Activated CD8-positive, alpha-beta T cell treated with anti-CD3 and anti-CD28 coated beads for 36 hours (primary cell): ENCODE measurements at regions of chr17 and their contacts with region 1.

Region 1: DNA sequence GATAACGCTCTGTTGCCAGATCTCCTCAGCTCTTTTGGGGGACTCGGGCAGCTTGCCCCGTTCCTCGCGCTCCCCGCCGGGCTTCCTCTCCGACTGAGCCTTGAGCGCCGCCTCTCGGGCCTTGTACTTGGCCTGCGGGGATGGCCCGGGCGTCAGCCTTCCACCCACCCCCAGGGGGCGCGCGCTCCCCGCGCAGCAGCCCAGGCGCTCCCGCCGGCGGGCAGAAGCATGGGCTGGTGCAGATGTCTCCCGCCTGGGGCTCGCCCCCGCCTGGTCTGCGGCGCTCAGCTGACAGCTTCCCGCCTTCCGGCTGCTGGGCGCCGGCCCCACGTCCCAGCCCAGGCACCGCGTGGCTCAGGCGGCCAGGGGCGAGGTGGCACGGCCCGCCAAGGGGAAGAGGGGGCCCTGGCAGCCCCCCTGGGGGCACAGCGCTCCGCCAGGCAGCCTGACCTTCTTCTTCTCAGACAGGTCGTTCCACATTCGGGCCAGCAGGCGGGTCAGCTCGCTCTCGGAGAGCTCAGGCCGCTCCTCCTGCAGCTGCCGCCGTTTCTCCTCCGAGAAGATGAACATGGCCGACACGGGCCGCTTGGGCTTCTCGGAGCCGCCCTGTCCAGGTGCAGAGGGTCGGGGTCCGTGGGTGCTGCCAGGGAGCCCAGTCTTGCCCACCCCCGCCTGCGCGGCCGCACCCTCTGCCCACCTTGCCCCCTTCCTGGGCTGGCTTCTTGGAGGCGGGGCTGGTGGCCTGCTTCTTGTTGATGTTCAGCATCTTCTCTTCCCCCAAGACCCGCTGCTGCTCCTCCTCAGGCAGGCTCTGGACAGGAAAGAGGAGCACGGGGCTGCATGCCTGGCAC is 8.9 kb downstream of the UBTF start:
- DNase-seq: peak; percentile 95
- ATAC-seq: peak; percentile 89
- H3K4me3 Mint-ChIP-seq: peak overlapping the region; percentile 82
- H3K27ac Mint-ChIP-seq: peak overlapping the region; percentile 97
- H3K4me1 Mint-ChIP-seq: peaks cover 63% of the 10 kb centered on the region
- H3K27me3 Mint-ChIP-seq: no peaks in the 10 kb centered on the region
- CTCF ChIP-seq: peak; percentile 99

Region 2: GRCh38 chr17:44199553-44200477 is 10.8 kb before region 1 on chr17 and contains the start of gene ATXN7L3:
- CTCF ChIA-PET with region 1: interaction called, 51 read pairs
- POLR2A ChIA-PET with region 1: interaction called, 58 read pairs
- intact Hi-C with region 1: no loop called
- DNase-seq: peak; percentile 100
- ATAC-seq: peak; percentile 85
- H3K4me3 Mint-ChIP-seq: peak within 1 kb of the TSS; percentile 89
- H3K27ac Mint-ChIP-seq: peak within 1 kb of the TSS; percentile 97
- H3K4me1 Mint-ChIP-seq: peaks cover 38% of the 10 kb centered on the region
- H3K27me3 Mint-ChIP-seq: no peaks in the 10 kb centered on the region
- CTCF ChIP-seq: no peak
- total RNA-seq, gene ATXN7L3: 58.1 to 62.3 TPM

Region 3: DNA sequence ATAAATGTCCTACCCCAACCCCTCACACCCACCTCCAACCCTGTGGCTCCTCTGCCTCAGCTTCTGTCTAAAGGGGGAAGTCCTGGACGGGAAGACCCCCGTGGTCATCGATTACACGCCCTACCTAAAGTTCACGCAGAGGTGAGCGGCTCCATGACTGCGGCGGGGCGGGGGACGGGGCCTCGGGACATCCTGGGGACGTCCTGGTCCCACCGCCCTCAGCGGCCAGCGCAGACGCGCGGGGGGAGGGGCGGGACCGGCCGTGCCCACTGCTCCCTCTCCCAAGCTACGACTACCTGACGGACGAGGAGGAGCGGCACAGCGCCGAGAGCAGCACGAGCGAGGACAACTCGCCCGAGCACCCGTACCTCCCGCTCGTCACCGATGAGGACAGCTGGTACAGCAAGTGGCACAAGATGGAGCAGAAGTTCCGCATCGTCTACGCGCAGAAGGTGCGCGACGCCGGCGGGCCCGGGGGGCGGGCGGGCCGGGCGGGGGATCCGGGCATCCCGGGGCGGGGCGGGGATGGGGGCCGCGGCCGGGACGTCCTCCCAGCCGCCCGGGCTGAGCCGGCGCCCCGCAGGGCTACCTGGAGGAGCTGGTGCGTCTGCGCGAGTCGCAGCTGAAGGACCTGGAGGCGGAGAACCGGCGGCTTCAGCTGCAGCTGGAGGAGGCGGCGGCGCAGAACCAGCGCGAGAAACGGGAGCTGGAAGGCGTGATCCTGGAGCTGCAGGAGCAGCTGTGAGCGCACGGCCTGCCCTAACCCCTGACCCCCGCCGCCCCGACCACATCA is 104.5 kb after region 1 on chr17:
- CTCF ChIA-PET with region 1: interaction called, 10 read pairs
- POLR2A ChIA-PET with region 1: interaction called, 12 read pairs
- intact Hi-C with region 1: no loop called
- DNase-seq: peak; percentile 70
- ATAC-seq: peak; percentile 75
- H3K4me3 Mint-ChIP-seq: peak overlapping the region; percentile 70
- H3K27ac Mint-ChIP-seq: no peak overlapping the region
- H3K4me1 Mint-ChIP-seq: peaks cover 12% of the 10 kb centered on the region
- H3K27me3 Mint-ChIP-seq: peaks cover 30% of the 10 kb centered on the region
- CTCF ChIP-seq: no peak

Region 4: GRCh38 chr17:44331249-44331760 is 120.7 kb after region 1 on chr17:
- CTCF ChIA-PET with region 1: interaction called, 63 read pairs
- POLR2A ChIA-PET with region 1: interaction called, 8 read pairs
- intact Hi-C with region 1: loop called (anchors 5 kb)
- DNase-seq: peak; percentile 89
- ATAC-seq: peak; percentile 55
- H3K4me3 Mint-ChIP-seq: no peak overlapping the region
- H3K27ac Mint-ChIP-seq: no peak overlapping the region
- H3K4me1 Mint-ChIP-seq: peaks cover 14% of the 10 kb centered on the region
- H3K27me3 Mint-ChIP-seq: no peaks in the 10 kb centered on the region
- CTCF ChIP-seq: peak; percentile 88

Region 5: GRCh38 chr17:44350733-44351226 is 140.2 kb after region 1 on chr17:
- CTCF ChIA-PET with region 1: interaction called, 53 read pairs
- POLR2A ChIA-PET with region 1: interaction called, 5 read pairs
- intact Hi-C with region 1: no loop called
- DNase-seq: peak; percentile 86
- ATAC-seq: peak; percentile 90
- H3K4me3 Mint-ChIP-seq: no peak overlapping the region
- H3K27ac Mint-ChIP-seq: no peak overlapping the region
- H3K4me1 Mint-ChIP-seq: peaks cover 11% of the 10 kb centered on the region
- H3K27me3 Mint-ChIP-seq: no peaks in the 10 kb centered on the region
- CTCF ChIP-seq: peak; percentile 80

Region 6: GRCh38 chr17:44400226-44400847 is 189.8 kb after region 1 on chr17:
- CTCF ChIA-PET with region 1: no interaction called
- POLR2A ChIA-PET with region 1: no interaction called
- intact Hi-C with region 1: no loop called
- DNase-seq: no peak
- ATAC-seq: no peak
- H3K4me3 Mint-ChIP-seq: no peak overlapping the region
- H3K27ac Mint-ChIP-seq: no peak overlapping the region
- H3K4me1 Mint-ChIP-seq: peaks cover 4% of the 10 kb centered on the region
- H3K27me3 Mint-ChIP-seq: no peaks in the 10 kb centered on the region
- CTCF ChIP-seq: peak; percentile 33